Common myeloid progenitor, CD34-positive (primary cell): ENCODE measurements at regions of chr11 and their contacts with region 1.

Region 1: DNA sequence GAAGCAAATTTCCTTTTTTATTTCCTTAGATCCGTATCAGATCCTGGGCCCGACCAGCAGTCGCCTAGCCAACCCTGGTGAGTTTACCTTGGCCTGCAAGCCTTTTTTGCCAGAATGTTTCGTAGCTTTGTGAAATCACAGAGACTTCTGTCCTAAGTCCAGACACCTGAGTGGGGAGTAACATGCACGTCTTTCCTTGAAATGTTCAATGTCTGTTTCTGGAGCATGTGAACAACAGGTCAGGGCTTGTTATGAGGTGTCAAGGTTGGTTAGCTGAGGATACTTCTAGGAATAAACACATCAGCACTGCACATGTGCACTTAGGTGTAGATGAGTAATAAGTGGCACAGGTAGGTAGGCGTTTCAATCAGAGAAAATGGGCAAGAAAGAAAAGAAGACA is 58.0 kb downstream of the KCNJ1 start:
- DNase-seq: no peak
- H3K4me3 ChIP-seq: no peak overlapping the region
- H3K27ac ChIP-seq: no peak overlapping the region
- H3K4me1 ChIP-seq: no peaks in the 10 kb centered on the region
- H3K27me3 ChIP-seq: no peaks in the 10 kb centered on the region

Region 2: GRCh38 chr11:128394431-128395089 is 414.6 kb before region 1 on chr11:
- CTCF ChIA-PET with region 1: no interaction called
- POLR2A ChIA-PET with region 1: no interaction called
- DNase-seq: no peak
- H3K4me3 ChIP-seq: no peak overlapping the region
- H3K27ac ChIP-seq: no peak overlapping the region
- H3K4me1 ChIP-seq: peaks cover 0 to 9% (median 4%) of the 10 kb centered on the region in 4 experiments
- H3K27me3 ChIP-seq: no peaks in the 10 kb centered on the region

Region 3: GRCh38 chr11:128796820-128797219 is 12.3 kb before region 1 on chr11:
- CTCF ChIA-PET with region 1: interaction called, 10 read pairs
- POLR2A ChIA-PET with region 1: no interaction called
- DNase-seq: no peak
- H3K4me3 ChIP-seq: no peak overlapping the region
- H3K27ac ChIP-seq: no peak overlapping the region
- H3K4me1 ChIP-seq: no peaks in the 10 kb centered on the region
- H3K27me3 ChIP-seq: no peaks in the 10 kb centered on the region

Region 4: DNA sequence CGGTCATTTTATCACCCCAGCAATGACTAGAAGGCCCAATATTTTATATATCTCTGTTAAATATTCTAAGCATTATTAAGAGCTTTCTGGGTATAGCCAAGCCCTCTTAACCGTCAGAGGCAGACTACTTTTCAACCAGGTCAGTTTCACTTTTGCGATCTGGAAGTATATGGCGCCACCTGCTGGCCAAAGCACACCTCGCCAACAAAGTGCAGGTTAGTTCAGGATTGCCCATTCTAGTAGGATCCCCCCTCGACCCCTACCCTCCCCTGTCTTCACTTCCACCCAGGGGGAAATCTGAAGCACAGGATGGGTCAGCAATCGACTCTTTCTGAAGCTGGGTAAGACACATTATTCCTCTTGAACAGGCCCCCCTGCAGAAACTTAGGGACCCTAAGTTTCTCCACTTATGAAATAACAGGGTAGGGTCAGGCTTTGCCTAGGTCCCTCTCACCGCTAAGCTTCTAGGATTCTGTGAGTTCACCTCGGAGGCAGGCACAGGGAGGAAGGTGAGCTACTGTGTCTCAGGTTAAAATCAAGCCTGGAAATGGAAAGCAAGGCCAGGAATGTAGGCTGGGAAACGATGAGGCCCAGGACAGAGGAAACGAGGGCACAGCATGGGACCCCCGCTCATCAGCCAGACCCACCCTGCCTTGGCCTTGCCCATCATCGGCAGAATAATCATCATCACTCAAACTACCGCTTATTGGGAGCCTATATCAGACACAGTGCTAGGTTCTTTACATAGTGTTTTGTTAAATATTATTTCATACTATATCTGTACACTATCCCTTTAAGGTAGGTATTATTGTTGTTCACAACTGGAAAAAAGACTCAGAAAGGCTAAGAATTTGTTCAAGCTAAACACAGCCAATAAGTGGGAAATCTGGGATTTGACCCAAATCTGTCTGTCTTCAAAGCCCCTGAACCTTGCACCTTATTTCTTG is 22.3 kb after region 1 on chr11:
- CTCF ChIA-PET with region 1: interaction called, 26 read pairs
- POLR2A ChIA-PET with region 1: no interaction called
- DNase-seq: peak; percentile 82 to 92 (median 90)
- H3K4me3 ChIP-seq: peak overlapping the region in 5 of 7 experiments; percentile 4 to 68 (median 33)
- H3K27ac ChIP-seq: peak overlapping the region in 1 of 2 experiments; percentile 14
- H3K4me1 ChIP-seq: peaks cover 11 to 33% (median 12%) of the 10 kb centered on the region in 4 experiments
- H3K27me3 ChIP-seq: no peaks in the 10 kb centered on the region